Psoas muscle (tissue), 8 donors: ENCODE measurements at regions of chr7 and their contacts with region 1.

Region 1: DNA sequence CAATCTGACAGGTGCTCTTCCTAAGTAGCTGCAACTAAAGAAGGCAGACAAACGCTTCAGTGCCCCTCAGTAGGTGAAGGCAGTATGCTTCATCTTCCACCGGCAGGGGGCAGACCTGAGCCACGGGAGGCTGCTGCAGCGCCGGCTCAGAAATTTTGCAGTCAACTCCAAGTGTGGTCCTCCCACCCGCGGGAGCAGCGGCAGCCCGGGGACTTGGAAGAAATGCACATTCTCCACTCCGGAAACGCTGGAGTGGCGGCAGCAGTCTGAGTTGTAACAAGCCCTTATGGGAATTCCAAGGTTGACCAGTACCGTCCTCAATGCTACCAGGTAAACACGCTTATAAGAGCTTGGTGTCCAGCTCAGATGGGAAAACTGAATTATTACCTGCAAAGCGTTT is 3.4 kb downstream of the IGFBP3 start:
- DNase-seq: peak; percentile 81 to 88
- ATAC-seq: peak; percentile 60 to 80 (median 76)
- H3K4me3 ChIP-seq: peak overlapping the region; percentile 30
- H3K27ac ChIP-seq: no peak overlapping the region
- H3K4me1 ChIP-seq: peaks cover 16% of the 10 kb centered on the region
- H3K27me3 ChIP-seq: peaks cover 0 to 49% (median 16%) of the 10 kb centered on the region in 3 donors
- CTCF ChIP-seq: peak; percentile 94

Region 2: GRCh38 chr7:46352004-46352954 is 434.6 kb after region 1 on chr7:
- intact Hi-C with region 1: loop called (anchors 2 to 10 kb)
- DNase-seq: no peak
- ATAC-seq: no peak
- H3K4me3 ChIP-seq: no peak overlapping the region
- H3K27ac ChIP-seq: no peak overlapping the region
- H3K4me1 ChIP-seq: no peaks in the 10 kb centered on the region
- H3K27me3 ChIP-seq: no peaks in the 10 kb centered on the region
- CTCF ChIP-seq: peak; percentile 49

Region 3: DNA sequence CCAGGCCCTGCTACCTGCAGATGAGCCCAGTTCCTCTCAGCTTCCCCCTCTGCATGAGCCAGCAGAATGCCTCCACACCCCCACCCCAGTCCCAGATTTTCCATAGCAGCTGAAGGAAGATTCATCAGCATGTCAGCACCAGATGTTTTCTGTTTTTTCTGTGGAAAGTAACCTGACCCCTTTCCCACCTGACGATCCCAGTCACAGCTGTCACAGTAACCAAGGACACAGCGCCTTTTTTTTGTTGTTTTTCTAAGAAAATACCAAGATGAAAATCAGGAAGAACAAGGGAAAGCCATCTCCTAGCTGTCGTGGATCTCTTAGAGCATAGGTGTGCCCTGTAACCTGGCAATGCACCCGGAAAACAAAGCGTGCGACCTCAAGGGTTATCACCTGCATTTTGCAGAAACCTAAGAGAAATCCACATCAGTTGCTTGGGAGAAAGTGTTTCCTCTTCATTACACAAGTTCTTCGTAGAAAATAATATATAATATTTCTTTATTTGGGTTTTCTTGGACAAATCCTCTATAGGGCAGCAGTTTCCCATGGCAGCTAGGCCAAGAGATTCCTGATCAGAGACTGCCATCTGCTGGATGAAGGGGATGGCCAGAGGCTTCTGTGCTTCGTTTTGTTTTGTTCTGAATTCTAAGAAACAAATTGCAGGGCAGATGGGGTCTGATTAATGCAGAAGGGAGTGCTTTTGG is 1262.3 kb after region 1 on chr7:
- intact Hi-C with region 1: loop called (anchors 2 kb)
- DNase-seq: peak in 1 of 2 donors; percentile 36
- ATAC-seq: peak; percentile 63 to 81 (median 78)
- H3K4me3 ChIP-seq: no peak overlapping the region
- H3K27ac ChIP-seq: no peak overlapping the region
- H3K4me1 ChIP-seq: peaks cover 39% of the 10 kb centered on the region
- H3K27me3 ChIP-seq: no peaks in the 10 kb centered on the region
- CTCF ChIP-seq: peak; percentile 86

Region 4: GRCh38 chr7:47254081-47255006 is 1336.7 kb after region 1 on chr7:
- intact Hi-C with region 1: loop called in 1 of 2 experiments (anchors 2 kb)
- DNase-seq: peak; percentile 89 to 95
- ATAC-seq: peak; percentile 91 to 97 (median 93)
- H3K4me3 ChIP-seq: peak overlapping the region; percentile 69
- H3K27ac ChIP-seq: peak overlapping the region; percentile 83
- H3K4me1 ChIP-seq: peaks cover 6% of the 10 kb centered on the region
- H3K27me3 ChIP-seq: no peaks in the 10 kb centered on the region
- CTCF ChIP-seq: peak; percentile 98